ENCODE measurements at regions of chr3 and their contacts with region 1.

Region 1: DNA sequence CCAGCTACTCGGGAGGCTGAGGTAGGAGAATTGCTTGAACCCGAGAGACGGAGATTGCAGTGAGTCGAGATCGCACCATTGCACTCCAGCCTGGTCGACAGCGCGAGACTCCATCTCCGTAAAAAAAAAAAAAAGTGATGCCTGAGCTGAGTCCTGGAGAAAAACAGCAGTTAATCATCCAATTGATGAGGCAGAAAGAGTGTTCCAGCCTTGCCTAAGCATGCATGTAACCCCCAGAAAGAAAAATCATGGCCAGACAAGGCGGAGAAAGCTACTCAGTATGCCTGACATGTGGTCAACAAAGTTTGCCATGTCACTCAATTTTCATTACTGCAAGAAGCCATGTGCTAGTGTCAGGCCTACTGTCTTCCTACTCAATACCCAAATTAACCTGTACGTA is 593.1 kb upstream of the MDFIC2 start:
- DNase-seq: no peak
- H3K4me3 ChIP-seq: no peak overlapping the region
- CTCF ChIP-seq: no peak

Region 2: DNA sequence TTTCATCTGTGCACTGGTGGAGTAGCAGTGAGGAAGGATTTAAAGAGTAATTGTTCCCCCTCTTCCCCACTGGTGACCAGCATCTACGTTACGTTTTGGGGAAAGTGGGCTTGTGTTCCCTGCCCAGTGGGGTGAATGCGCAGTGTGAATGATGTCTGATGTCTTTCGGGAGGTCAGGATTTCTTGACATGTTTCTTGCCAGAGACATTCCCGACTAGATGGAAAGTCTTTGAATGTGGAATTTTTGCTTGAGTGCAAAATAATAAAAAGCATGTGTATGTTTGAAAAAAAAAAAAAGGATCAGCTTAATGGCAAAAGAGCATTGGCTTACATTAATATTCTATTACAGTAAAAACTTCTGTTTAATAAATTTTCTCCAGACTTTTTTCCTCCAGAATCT is 45.8 kb after region 1 on chr3:
- in situ Hi-C with region 1: loop called (anchors 5 kb)
- DNase-seq: no peak
- H3K4me3 ChIP-seq: no peak overlapping the region
- CTCF ChIP-seq: no peak

Region 3: DNA sequence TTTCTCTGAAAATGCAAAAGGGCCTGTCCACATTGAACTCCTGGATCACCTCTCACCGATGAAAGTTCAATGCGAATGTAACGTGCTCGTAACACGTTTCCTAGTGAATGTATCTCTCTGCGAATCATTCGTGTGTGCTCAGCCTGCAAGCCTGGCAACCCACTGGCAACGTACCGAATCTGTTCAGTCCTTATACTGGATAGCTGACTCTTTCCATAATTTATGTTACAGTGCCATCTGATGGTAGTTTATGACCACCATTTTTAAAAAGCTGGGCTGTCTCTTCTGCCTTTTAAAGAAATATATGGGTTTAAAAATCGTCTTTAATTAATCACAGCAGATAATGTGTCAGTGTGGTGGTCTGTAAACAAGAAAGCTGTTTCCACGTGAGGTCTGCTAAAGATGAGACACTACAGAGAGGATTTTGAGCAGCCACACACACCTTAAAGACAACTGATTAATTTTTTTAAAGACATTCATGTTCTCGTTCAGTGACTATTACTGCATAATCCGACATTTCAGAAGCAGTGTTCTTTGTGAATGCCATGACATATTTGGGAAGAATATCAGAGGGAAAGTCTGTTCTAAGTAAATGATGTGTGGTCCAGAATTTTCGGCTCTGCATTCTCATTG is 747.4 kb after region 1 on chr3:
- in situ Hi-C with region 1: no loop called
- DNase-seq: peak; percentile 29
- H3K4me3 ChIP-seq: no peak overlapping the region
- CTCF ChIP-seq: peak; percentile 41

Measured in astrocyte of the cerebellum (primary cell).